ENCODE measurements at regions of chr2 and their contacts with region 1.

Region 1: GRCh38 chr2:174688079-174688478 is 76.2 kb downstream of the CHRNA1 start:
- DNase-seq: peak; percentile 65
- ATAC-seq: peak; percentile 42
- H3K4me3 ChIP-seq: no peak overlapping the region
- H3K4me3 Mint-ChIP-seq: no peak overlapping the region
- H3K27ac ChIP-seq: no peak overlapping the region
- H3K27ac Mint-ChIP-seq: no peak overlapping the region
- H3K4me1 ChIP-seq: peaks cover 7 to 8% of the 10 kb centered on the region in 2 donors
- H3K4me1 Mint-ChIP-seq: peaks cover 9% of the 10 kb centered on the region
- H3K27me3 ChIP-seq: peaks cover 0 to 14% (median 0%) of the 10 kb centered on the region in 4 experiments
- H3K27me3 Mint-ChIP-seq: peaks cover 3% of the 10 kb centered on the region
- CTCF ChIP-seq: peak; percentile 76

Region 2: DNA sequence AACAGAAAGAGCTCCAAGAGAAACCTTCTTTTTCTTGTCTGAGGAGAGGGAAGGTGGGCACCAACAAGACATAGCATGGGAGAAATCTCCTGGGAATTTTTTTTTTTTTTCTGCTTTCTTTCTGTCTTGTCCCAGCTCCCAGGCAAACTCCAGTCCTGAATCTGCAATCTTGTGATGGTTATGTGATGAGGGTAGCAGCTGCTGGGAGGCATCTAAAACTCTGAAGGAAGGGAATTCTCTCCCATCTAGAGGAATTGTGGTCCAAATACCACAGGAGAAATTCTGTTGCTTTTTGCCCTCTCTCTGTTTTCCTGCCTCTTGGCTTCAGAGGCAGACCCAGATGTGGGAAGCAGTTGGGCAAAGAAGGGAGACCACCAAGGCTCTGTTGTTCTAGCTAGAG is 275.8 kb before region 1 on chr2:
- CTCF ChIA-PET with region 1: no interaction called
- POLR2A ChIA-PET with region 1: no interaction called
- intact Hi-C with region 1: no loop called
- DNase-seq: no peak
- ATAC-seq: no peak
- H3K4me3 ChIP-seq: no peak overlapping the region
- H3K4me3 Mint-ChIP-seq: no peak overlapping the region
- H3K27ac ChIP-seq: no peak overlapping the region
- H3K27ac Mint-ChIP-seq: no peak overlapping the region
- H3K4me1 ChIP-seq: peaks cover 0 to 3% of the 10 kb centered on the region in 2 donors
- H3K4me1 Mint-ChIP-seq: no peaks in the 10 kb centered on the region
- H3K27me3 ChIP-seq: no peaks in the 10 kb centered on the region
- H3K27me3 Mint-ChIP-seq: no peaks in the 10 kb centered on the region
- CTCF ChIP-seq: no peak

Region 3: GRCh38 chr2:174428214-174428613 is 259.9 kb before region 1 on chr2:
- CTCF ChIA-PET with region 1: no interaction called
- POLR2A ChIA-PET with region 1: no interaction called
- intact Hi-C with region 1: no loop called
- DNase-seq: no peak
- ATAC-seq: no peak
- H3K4me3 ChIP-seq: no peak overlapping the region
- H3K4me3 Mint-ChIP-seq: no peak overlapping the region
- H3K27ac ChIP-seq: no peak overlapping the region
- H3K27ac Mint-ChIP-seq: no peak overlapping the region
- H3K4me1 ChIP-seq: no peaks in the 10 kb centered on the region
- H3K4me1 Mint-ChIP-seq: no peaks in the 10 kb centered on the region
- H3K27me3 ChIP-seq: no peaks in the 10 kb centered on the region
- H3K27me3 Mint-ChIP-seq: no peaks in the 10 kb centered on the region
- CTCF ChIP-seq: no peak

Region 4: GRCh38 chr2:174610243-174610995 is 77.7 kb before region 1 on chr2:
- CTCF ChIA-PET with region 1: interaction called, 202 read pairs
- POLR2A ChIA-PET with region 1: no interaction called
- intact Hi-C with region 1: loop called (anchors 2 kb)
- DNase-seq: no peak
- ATAC-seq: no peak
- H3K4me3 ChIP-seq: no peak overlapping the region
- H3K4me3 Mint-ChIP-seq: peak overlapping the region; percentile 60
- H3K27ac ChIP-seq: peak overlapping the region; percentile 75 to 94
- H3K27ac Mint-ChIP-seq: peak overlapping the region; percentile 88
- H3K4me1 ChIP-seq: peaks cover 72 to 86% of the 10 kb centered on the region in 2 donors
- H3K4me1 Mint-ChIP-seq: peaks cover 91% of the 10 kb centered on the region
- H3K27me3 ChIP-seq: no peaks in the 10 kb centered on the region
- H3K27me3 Mint-ChIP-seq: no peaks in the 10 kb centered on the region
- CTCF ChIP-seq: no peak

Region 5: GRCh38 chr2:174673876-174674275 is 14.2 kb before region 1 on chr2:
- CTCF ChIA-PET with region 1: interaction called, 27 read pairs
- POLR2A ChIA-PET with region 1: no interaction called
- intact Hi-C with region 1: no loop called
- DNase-seq: no peak
- ATAC-seq: no peak
- H3K4me3 ChIP-seq: no peak overlapping the region
- H3K4me3 Mint-ChIP-seq: no peak overlapping the region
- H3K27ac ChIP-seq: no peak overlapping the region
- H3K27ac Mint-ChIP-seq: no peak overlapping the region
- H3K4me1 ChIP-seq: no peaks in the 10 kb centered on the region
- H3K4me1 Mint-ChIP-seq: peaks cover 4% of the 10 kb centered on the region
- H3K27me3 ChIP-seq: no peaks in the 10 kb centered on the region
- H3K27me3 Mint-ChIP-seq: no peaks in the 10 kb centered on the region
- CTCF ChIP-seq: no peak

Measured in B cell (primary cell).